ENCODE measurements at regions of chr17 and their contacts with region 1.

Region 1: GRCh38 chr17:76072148-76072858 is at the start of gene SRP68:
- DNase-seq: peak; percentile 67 to 96
- H3K4me3 ChIP-seq: peak within 1 kb of the TSS; percentile 81 to 96
- H3K27ac ChIP-seq: peak within 1 kb of the TSS; percentile 50 to 68
- H3K4me1 ChIP-seq: peaks cover 17 to 38% of the 10 kb centered on the region in 2 donors
- H3K27me3 ChIP-seq: peaks cover 31% of the 10 kb centered on the region
- CTCF ChIP-seq: no peak
- total RNA-seq, gene SRP68: 15.6 TPM

Region 2: DNA sequence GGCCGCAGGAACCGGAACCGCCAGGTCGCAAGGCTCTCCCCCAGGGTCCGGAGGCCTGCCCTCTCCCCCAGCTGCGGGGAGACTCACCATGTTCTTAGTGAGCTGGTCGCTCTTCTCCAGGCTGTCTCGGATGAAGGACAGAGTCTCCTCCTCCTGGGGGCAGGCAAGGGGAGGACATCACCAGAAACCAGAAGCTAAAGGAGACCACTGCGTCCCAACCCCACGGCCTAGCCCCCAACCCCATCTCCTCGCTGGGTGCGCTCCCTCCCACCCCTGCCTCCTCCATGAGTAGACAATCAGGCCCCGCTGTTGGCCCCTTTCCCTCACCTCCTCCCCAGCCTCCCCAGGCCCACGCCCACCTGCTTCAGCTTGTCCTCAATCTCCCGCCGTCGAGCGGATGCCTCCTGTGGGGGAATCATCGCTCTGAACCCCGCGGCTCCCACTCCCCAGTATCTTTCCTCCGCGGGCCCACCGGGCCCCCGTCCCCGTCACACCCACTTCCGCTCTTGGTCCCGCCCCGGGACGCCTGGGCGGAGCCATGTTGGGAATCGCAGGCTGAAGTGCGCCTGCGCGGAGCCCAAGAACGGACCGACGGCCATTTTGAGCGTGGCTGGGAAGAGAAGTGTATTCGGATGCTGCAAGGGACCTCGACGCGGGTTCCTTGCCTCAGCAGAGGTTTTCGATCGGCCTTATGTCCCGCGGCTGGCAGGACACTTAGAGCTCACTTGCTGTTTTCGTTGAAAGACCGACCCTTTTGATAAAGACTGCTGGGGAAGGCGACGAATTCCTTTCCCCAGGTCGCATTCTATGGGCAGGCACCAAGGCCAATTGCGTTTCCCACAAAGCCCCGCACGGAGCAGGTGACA is 31.2 kb after region 1 on chr17 and contains the start of gene EXOC7:
- intact Hi-C with region 1: loop called (anchors 2 kb)
- DNase-seq: peak; percentile 60 to 94
- H3K4me3 ChIP-seq: peak within 1 kb of the TSS; percentile 57 to 87
- H3K27ac ChIP-seq: peak within 1 kb of the TSS; percentile 76
- H3K4me1 ChIP-seq: peaks cover 5 to 8% of the 10 kb centered on the region in 2 donors
- H3K27me3 ChIP-seq: no peaks in the 10 kb centered on the region
- CTCF ChIP-seq: peak in 1 of 3 experiments; percentile 15
- total RNA-seq, gene EXOC7: 123 TPM